HAP-1 (cell line): ENCODE measurements at regions of chr9 and their contacts with region 1.

Region 1: DNA sequence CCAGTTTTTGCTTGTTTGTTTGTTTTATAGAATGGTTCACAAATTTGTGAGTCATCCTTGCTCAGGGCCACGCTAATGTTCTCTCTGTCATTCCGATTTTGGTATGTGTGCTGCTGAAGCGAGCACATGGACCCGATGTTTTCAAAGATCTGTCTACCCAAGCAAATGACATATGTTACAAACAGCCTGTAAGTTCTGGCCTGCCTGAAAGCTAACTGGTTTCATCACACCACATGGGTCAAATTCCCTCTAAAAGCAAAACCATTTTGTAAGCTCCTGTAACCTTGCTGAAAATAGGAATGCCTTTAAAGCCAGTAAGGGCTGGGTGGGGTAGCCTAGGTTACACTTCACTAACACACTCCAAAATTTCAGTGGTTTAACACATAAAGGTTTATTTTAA is 25.4 kb downstream of the DMRT3 start:
- DNase-seq: no peak
- H3K4me3 ChIP-seq: no peak overlapping the region
- H3K4me1 ChIP-seq: no peaks in the 10 kb centered on the region
- H3K27me3 ChIP-seq: no peaks in the 10 kb centered on the region

Region 2: GRCh38 chr9:893843-894420 is 107.9 kb before region 1 on chr9:
- in situ Hi-C with region 1: loop called (anchors 5 kb)
- DNase-seq: peak; percentile 64 to 68
- H3K4me3 ChIP-seq: no peak overlapping the region
- H3K4me1 ChIP-seq: no peaks in the 10 kb centered on the region
- H3K27me3 ChIP-seq: no peaks in the 10 kb centered on the region

Region 3: DNA sequence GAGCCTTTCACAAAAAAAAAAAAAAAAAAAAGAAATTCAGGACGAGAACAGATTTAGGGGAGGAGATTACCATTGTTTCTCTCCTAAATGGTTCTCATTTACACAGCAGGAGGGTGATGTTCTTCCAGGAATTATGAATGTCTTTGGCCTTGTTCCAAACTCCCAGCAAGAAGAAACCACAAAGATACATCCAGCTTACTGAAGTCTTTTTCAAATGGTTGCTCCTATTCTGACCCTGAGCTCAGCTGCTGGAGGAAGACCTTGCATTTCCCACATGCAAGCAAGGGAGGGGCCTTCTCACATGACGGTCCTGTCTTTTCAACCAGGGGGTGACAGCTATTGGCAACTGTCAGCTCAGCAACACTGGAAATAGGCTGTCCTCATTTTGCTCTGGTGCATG is 1416.8 kb after region 1 on chr9:
- in situ Hi-C with region 1: no loop called
- DNase-seq: peak; percentile 57 to 68
- H3K4me3 ChIP-seq: no peak overlapping the region
- H3K4me1 ChIP-seq: peaks cover 14% of the 10 kb centered on the region
- H3K27me3 ChIP-seq: no peaks in the 10 kb centered on the region